ENCODE measurements at regions of chr15 and their contacts with region 1.

Region 1: GRCh38 chr15:90201130-90201949 is at the start of gene SEMA4B:
- DNase-seq: peak; percentile 57
- H3K4me3 ChIP-seq: peak within 1 kb of the TSS; percentile 92 to 95 (median 92)
- H3K27ac ChIP-seq: peak within 1 kb of the TSS; percentile 40
- H3K4me1 ChIP-seq: peaks cover 23% of the 10 kb centered on the region
- H3K27me3 ChIP-seq: no peaks in the 10 kb centered on the region
- CTCF ChIP-seq: no peak
- total RNA-seq, gene SEMA4B: 44.3 to 108 TPM

Region 2: DNA sequence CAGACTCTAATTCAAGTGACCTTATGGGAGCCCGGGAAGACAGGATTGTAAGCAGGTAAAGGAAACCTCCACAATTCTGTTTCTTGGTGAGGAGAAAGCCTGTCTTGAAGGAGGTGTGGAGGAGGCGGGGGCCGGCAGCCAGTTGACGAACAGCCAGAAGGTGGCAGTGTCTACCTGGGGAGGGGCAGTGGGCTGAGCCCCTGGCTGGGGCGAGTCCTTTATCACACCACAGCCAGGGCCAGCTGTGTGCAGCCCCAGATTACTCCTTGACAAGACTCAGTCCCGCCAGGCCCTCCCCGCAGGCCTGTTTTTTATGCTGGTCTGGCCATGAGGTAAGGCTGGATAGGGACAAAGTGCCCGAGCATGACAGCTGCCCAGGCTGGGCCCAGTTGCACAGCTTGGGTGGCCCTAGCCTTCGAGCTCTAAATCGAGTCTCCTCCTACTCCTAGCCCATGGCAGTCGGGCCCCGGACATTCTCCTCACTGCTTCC is 58.1 kb before region 1 on chr15:
- CTCF ChIA-PET with region 1: no interaction called
- dilution Hi-C with region 1: no loop called
- in situ Hi-C with region 1: no loop called
- intact Hi-C with region 1: no loop called
- DNase-seq: peak; percentile 48
- H3K4me3 ChIP-seq: no peak overlapping the region
- H3K27ac ChIP-seq: no peak overlapping the region
- H3K4me1 ChIP-seq: peaks cover 10% of the 10 kb centered on the region
- H3K27me3 ChIP-seq: no peaks in the 10 kb centered on the region
- CTCF ChIP-seq: peak; percentile 56 to 78

Region 3: DNA sequence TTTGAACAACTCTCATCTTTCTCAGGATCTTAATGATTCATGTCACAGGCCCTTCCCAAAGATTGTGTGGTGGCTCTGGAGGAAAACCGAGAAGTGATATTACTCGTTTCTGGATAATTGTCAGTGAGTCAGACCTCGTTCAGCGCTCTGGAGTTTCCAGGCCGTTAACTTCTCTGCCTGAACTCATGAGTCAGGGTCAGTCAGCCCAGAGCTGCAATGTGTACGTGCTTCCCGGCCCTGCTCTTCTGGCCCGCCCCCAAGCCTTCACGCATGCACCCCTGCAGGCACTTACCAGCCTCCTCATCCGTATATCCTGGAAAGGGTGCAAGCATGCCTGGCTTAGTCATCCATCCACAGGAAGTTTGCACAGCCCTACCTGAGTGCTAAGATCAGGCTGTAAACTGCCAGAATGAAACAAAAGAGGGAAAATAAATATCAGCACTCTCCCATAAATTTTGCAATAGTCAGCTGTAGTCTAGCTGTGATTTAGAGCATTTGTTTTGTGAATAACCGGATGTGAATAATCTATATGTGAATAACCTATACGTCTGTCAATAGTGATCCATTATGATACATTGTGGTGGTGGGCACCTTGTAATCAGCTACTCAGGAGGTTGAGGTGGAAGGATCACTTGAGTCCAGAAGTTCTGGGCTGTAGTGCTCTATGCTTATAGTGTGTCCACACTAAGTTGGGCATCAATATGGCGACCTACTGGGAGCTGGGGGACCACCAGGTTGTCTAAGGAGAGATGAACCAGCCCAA is 35.5 kb before region 1 on chr15:
- CTCF ChIA-PET with region 1: no interaction called
- dilution Hi-C with region 1: no loop called
- in situ Hi-C with region 1: no loop called
- intact Hi-C with region 1: loop called (anchors 1 kb)
- DNase-seq: peak; percentile 100
- H3K4me3 ChIP-seq: no peak overlapping the region
- H3K27ac ChIP-seq: peak overlapping the region; percentile 71
- H3K4me1 ChIP-seq: peaks cover 39% of the 10 kb centered on the region
- H3K27me3 ChIP-seq: no peaks in the 10 kb centered on the region
- CTCF ChIP-seq: no peak

Region 4: DNA sequence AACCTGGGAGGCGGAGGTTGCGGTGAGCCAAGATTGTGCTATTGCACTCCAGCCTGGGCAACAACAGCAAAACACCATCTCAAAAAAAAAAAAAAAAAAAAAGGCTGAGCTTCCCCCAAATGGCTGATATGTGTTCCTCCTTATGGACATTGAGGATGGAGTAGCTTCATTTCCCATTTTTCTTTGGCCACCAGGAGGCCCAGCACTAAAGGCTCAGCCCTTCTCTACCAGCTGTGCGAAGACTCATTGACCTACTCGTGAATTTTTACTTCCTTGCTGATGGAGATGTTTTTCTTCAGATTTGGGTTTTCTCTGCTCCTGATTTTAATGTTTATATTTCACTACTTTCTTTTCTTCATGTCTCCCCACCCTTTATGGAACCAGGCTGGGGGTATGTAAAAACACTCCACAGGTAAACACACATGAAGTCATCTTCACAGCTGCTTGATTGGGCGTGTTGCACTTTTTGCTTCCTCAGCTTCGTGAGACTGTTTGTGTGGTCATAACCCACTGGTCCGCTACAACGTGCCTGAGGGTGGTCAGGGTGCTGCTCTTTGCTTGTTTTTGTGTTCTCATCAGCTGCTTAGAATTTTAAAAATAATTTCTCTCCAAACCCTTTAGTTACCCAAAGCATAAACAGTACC is 13.3 kb after region 1 on chr15:
- CTCF ChIA-PET with region 1: interaction called, 4 read pairs
- dilution Hi-C with region 1: no loop called
- in situ Hi-C with region 1: no loop called
- intact Hi-C with region 1: loop called (anchors 1 kb)
- DNase-seq: no peak
- H3K4me3 ChIP-seq: no peak overlapping the region
- H3K27ac ChIP-seq: no peak overlapping the region
- H3K4me1 ChIP-seq: peaks cover 57% of the 10 kb centered on the region
- H3K27me3 ChIP-seq: no peaks in the 10 kb centered on the region
- CTCF ChIP-seq: peak; percentile 31 to 46

Region 5: GRCh38 chr15:90306560-90306959 is 105.2 kb after region 1 on chr15:
- CTCF ChIA-PET with region 1: no interaction called
- dilution Hi-C with region 1: no loop called
- in situ Hi-C with region 1: no loop called
- intact Hi-C with region 1: no loop called
- DNase-seq: no peak
- H3K4me3 ChIP-seq: no peak overlapping the region
- H3K27ac ChIP-seq: no peak overlapping the region
- H3K4me1 ChIP-seq: no peaks in the 10 kb centered on the region
- H3K27me3 ChIP-seq: no peaks in the 10 kb centered on the region
- CTCF ChIP-seq: no peak